ENCODE measurements at regions of chr4 and their contacts with region 1.

Region 1: GRCh38 chr4:152535903-152536544 is at the start of gene FBXW7:
- DNase-seq: peak; percentile 100
- H3K4me3 Mint-ChIP-seq: peak within 1 kb of the TSS; percentile 99
- H3K27ac Mint-ChIP-seq: peak within 1 kb of the TSS; percentile 100
- H3K4me1 Mint-ChIP-seq: peaks cover 63% of the 10 kb centered on the region
- H3K27me3 Mint-ChIP-seq: no peaks in the 10 kb centered on the region
- total RNA-seq, gene FBXW7: 53.0 and 53.3 TPM in 2 replicates

Region 2: DNA sequence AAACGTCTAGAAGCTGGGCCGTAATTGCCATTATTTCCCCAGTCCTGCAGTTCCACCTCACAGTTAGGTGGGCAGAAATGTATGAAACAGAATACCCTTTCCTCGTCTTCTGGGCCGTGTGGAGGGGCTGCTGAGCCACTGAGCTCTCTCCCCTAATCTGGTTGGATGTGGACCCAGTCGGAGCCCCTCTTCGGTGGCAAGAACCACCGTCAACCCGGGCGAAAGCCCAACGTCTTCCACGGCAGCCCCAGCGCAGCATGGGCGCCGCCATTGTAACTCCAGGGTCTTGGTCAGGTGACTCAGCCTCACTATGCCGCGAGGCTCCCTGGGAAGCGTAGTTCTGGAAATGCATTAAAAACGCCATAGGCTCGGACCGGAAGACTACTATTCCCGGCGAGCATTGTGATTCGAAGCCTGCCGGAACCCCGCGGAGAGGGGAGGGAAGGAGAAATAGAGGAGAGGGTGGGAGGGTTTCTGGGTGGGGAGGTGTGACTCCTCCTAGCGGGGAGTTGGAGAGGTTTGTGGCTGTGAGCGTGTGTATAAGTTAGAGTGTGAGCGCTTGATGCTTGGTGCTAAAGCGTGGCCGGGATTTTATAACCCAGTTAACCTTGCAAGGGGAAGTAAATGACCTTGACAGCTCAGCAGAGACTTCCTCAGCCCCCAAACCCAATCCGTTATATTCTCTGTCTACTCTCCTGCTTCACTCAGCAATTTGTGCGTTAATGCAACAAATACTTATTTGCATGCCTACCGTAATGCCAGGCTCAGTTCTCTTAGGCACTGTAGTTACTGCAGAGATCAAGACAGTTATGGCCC is 775.1 kb before region 1 on chr4 and contains the start of gene GATB:
- intact Hi-C with region 1: loop called (anchors 1 kb)
- DNase-seq: peak; percentile 88
- H3K4me3 Mint-ChIP-seq: peak within 1 kb of the TSS; percentile 98
- H3K27ac Mint-ChIP-seq: peak within 1 kb of the TSS; percentile 97
- H3K4me1 Mint-ChIP-seq: peaks cover 21% of the 10 kb centered on the region
- H3K27me3 Mint-ChIP-seq: peaks cover 6% of the 10 kb centered on the region
- total RNA-seq, gene GATB: 16.1 and 20.0 TPM in 2 replicates

Region 3: DNA sequence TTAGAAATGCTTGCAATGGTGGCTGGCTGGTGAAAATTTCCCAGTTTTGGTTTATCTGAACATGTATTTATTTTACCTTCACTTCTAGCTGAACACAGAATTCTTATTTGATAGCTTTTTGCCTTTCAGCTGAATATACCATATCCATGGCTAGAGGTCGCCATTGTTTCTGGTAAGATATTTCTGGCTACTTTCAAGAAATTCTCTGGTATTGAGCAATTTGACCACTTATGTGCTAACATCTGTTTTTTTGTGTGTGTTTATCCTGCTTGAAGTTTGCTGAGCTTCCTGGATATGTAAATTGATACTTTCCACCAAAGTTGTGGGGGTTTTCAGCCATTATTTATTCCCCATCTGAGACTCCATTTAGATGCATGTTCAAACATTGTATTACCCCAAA is 75.5 kb before region 1 on chr4:
- intact Hi-C with region 1: loop called (anchors 2 kb)
- DNase-seq: no peak
- H3K4me3 Mint-ChIP-seq: no peak overlapping the region
- H3K27ac Mint-ChIP-seq: peak overlapping the region; percentile 59
- H3K4me1 Mint-ChIP-seq: peaks cover 79% of the 10 kb centered on the region
- H3K27me3 Mint-ChIP-seq: no peaks in the 10 kb centered on the region

Region 4: DNA sequence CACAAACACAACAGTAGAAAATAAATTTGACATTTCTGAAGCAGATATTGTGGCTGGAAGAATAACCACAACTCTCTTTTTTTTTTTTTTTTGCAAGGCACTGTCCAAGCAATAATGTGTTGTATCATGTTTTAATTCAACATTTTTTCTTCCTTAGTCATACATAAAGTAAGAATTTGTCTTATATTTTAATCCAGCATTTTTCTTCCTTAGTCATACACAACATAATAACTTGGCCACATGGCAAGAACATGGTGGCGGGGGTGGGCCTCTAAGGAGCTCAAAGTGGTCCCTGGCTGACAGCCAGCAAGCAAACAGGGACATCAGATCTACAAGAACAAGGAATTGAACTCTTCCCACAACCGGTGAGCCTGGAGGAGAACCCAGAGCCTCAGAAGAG is 20.3 kb before region 1 on chr4:
- intact Hi-C with region 1: loop called (anchors 2 kb)
- DNase-seq: no peak
- H3K4me3 Mint-ChIP-seq: no peak overlapping the region
- H3K27ac Mint-ChIP-seq: no peak overlapping the region
- H3K4me1 Mint-ChIP-seq: peaks cover 30% of the 10 kb centered on the region
- H3K27me3 Mint-ChIP-seq: no peaks in the 10 kb centered on the region

Region 5: DNA sequence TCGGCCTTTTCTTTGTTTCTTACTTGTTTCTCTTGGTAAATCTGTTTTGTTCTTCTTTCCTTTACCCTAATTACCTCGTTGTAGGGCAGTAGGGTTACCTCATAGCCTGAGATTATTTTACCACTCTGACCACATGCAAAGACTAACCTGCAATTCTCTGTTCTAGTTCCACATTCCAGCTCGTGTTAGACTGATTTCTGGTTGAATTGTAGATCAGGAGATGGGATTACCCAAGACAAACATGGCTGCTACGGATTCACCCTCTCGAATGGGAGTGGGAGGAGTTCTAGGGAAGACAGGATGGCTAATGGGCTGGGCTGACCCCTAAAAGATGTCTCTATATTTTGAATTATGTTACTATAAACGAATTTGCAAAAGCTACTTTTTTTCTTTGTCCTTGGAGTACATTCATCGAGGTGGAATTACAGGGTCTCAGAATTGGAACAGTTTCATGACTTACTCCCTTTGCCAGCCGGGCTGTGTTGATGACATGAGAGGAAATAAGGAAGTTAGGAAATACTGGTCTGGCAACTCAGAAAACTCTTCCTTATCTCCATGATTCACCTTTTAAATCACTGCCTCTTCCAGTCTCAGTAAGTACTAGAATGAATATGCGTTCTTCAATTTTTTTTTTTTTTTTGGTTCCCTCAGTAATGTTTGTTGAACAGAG is 36.5 kb after region 1 on chr4:
- intact Hi-C with region 1: no loop called
- DNase-seq: no peak
- H3K4me3 Mint-ChIP-seq: no peak overlapping the region
- H3K27ac Mint-ChIP-seq: no peak overlapping the region
- H3K4me1 Mint-ChIP-seq: no peaks in the 10 kb centered on the region
- H3K27me3 Mint-ChIP-seq: peaks cover 7% of the 10 kb centered on the region

Region 6: DNA sequence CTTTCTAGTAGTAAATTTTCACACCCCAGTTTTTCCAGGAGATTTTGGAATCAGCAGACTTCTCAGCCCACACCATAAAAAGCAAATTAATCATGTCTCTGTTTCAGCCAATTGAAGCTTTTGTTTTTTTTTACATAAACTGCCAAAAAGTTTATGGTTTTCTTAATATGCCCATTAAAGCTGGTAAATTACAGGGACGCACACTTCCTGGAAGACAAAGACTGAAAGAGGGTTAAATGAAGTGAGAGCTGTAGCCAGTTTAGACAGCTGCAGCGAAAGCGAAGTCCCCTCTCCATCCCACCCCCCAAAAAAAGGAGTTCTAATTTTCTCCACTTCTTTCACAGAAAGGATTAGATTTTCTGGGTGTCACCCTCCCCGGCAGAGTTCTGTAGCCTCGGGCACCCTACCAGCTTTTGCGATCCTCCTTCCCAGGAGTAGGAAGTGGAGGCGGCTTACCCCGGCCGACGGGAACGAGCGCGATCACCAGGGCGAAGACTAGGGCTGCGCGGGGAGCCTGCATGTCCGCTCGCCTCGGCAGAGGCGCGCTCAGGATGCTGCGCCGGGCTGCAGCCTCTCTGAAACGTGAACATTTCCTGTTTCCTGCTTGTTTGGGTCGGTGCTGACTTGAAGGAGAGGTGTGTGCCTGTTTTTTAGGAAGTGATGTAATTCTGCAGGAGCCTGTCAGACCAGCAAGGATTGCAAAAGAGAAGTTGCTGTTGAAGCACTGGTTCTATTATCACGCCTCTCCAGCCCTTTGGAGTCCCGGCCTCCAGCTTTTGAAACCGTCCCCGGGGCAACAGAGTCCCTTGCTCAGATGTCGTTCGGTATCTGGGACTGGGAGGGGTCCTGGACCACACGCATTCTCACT is 143.6 kb after region 1 on chr4 and contains the start of gene TMEM154:
- intact Hi-C with region 1: loop called (anchors 1 kb)
- DNase-seq: peak; percentile 77
- H3K4me3 Mint-ChIP-seq: peak within 1 kb of the TSS; percentile 91
- H3K27ac Mint-ChIP-seq: peak within 1 kb of the TSS; percentile 92
- H3K4me1 Mint-ChIP-seq: peaks cover 84% of the 10 kb centered on the region
- H3K27me3 Mint-ChIP-seq: no peaks in the 10 kb centered on the region
- total RNA-seq, gene TMEM154: 13.0 and 13.3 TPM in 2 replicates

Region 7: DNA sequence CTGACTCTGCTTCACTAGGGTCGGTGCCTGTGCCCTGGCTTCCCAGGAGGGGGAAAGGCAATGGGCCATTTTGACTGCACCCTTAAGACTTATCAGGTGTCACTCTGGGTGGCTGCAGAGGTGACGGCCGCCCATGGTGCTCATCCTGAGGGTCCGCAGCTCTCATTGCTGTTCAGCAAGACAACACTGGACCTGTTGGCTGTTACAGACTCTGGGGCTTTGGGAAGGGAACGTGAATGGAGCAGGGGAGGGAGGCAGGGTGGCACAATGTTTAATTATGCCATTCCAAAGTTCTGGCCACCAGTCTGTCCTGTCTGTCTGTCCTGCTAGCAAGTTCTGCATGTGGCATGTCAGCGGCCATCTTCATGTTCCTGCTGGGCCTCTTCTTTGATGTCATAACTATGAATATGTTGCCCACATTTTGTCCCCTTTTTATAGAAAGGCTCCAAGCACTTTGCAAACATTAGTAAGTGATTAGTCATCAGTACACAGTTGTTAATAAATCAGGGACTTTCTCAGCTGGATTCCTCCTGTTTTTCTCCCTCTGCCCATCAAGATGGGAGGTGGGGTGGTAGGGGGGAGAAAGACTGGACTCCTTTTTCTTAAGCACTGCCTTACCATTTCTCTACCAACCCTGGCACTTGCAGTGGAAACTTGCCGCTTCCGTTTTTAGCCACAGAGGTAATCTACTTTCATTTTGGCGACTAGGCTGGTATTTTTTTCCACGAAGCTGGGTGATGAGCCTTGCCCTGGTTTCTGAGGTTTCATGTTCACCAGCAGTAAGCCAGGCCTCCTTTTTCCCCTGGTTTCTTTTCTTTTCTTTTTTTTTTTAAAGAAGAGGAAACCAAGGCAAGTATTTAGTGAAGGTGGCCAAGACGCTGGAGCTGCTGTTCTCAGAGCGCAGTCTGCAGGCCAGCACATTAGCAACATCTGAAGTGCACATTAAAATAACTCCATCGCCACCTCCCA is 579.6 kb after region 1 on chr4:
- intact Hi-C with region 1: loop called (anchors 5 kb)
- DNase-seq: peak; percentile 69
- H3K4me3 Mint-ChIP-seq: peak overlapping the region; percentile 56
- H3K27ac Mint-ChIP-seq: peak overlapping the region; percentile 80
- H3K4me1 Mint-ChIP-seq: no peaks in the 10 kb centered on the region
- H3K27me3 Mint-ChIP-seq: peaks cover 6% of the 10 kb centered on the region